SK-N-SH (cell line): ENCODE measurements at regions of chr12 and their contacts with region 1.

Region 1: GRCh38 chr12:108040947-108041346 is 88.1 kb upstream of the WSCD2 start:
- DNase-seq: no peak
- H3K4me3 ChIP-seq: no peak overlapping the region
- H3K27ac ChIP-seq: no peak overlapping the region
- H3K4me1 ChIP-seq: no peaks in the 10 kb centered on the region
- H3K27me3 ChIP-seq: no peaks in the 10 kb centered on the region
- CTCF ChIP-seq: no peak
- EP300 ChIP-seq: no peak
- RAD21 ChIP-seq: no peak

Region 2: DNA sequence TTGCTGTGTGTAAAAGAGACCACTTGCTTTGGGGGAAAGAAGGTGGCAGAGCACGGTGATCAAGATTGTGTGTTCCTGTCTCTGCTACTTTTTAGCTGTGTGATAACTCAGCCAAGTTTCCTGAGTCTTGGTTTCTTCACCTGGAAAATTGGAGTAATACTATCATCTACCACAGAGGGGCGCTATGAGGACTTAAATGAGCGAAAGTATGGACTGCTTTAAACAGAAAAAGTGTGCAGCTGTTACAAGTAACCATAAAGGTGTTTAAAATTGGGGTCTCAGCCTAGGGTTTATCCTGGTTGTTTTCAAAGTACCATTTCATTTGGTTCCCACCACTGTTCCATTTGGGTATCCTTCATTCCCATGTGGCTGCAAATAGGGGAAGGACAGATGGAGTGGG is 22.2 kb after region 1 on chr12:
- CTCF ChIA-PET with region 1: interaction called, 10 read pairs
- POLR2A ChIA-PET with region 1: no interaction called
- DNase-seq: no peak
- H3K4me3 ChIP-seq: no peak overlapping the region; a peak in 1 of 4 replicates
- H3K27ac ChIP-seq: no peak overlapping the region
- H3K4me1 ChIP-seq: no peaks in the 10 kb centered on the region; a peak in 1 of 4 replicates
- H3K27me3 ChIP-seq: no peaks in the 10 kb centered on the region
- CTCF ChIP-seq: peak; percentile 39
- EP300 ChIP-seq: no peak
- RAD21 ChIP-seq: peak; percentile 64

Region 3: DNA sequence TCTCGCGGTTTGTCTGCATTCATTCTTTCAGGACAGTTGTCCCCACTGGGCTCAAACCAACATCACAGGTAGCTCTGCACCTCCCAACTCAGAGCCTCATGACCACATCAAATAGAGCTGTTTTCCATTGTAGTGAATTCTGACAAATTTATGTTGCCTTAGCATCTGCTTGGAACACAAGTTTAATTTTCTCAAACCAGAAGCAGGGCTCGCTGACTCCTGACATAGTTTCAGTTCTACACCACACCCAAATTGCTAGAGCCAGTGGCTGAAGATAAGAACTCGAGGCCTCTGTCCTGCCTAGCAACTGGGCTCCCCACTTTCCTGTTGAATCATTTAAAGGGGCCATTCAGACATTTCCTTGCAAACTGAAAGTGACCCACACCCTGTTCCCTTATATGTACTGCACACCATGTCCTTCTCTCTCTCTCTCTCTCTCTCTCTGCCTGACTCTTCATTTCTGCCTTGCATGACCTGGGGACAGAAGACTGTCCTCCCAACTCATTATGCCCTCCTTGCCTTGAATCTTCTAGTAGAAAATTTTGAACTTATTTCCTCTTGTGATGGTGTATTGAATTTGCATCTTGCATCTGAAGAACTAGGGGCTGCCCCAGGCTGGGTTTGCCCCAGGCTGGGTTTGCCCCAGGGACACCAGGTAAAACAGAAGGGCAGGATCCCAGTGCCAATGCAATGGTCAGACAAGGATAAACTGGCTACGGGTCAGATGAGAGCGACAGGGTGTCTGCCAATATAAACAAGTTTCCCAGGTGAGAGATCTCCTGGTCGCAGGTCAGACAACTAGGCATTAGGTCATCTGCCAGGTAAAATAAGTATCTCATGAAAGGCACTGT is 78.4 kb after region 1 on chr12:
- CTCF ChIA-PET with region 1: no interaction called
- POLR2A ChIA-PET with region 1: no interaction called
- DNase-seq: no peak
- H3K4me3 ChIP-seq: no peak overlapping the region
- H3K27ac ChIP-seq: no peak overlapping the region
- H3K4me1 ChIP-seq: peaks cover 0 to 4% of the 10 kb centered on the region in 2 experiments; a peak in 1 of 4 replicates
- H3K27me3 ChIP-seq: no peaks in the 10 kb centered on the region
- CTCF ChIP-seq: no peak
- EP300 ChIP-seq: no peak
- RAD21 ChIP-seq: no peak